Dendritic cell treated with granulocyte-macrophage colony-stimulating factor and Interleukin-4, amounts not matched to agents 40 ng/mL and 50 ng/mL, for 4 days (primary cell): ENCODE measurements at regions of chr20 and their contacts with region 1.

Region 1: DNA sequence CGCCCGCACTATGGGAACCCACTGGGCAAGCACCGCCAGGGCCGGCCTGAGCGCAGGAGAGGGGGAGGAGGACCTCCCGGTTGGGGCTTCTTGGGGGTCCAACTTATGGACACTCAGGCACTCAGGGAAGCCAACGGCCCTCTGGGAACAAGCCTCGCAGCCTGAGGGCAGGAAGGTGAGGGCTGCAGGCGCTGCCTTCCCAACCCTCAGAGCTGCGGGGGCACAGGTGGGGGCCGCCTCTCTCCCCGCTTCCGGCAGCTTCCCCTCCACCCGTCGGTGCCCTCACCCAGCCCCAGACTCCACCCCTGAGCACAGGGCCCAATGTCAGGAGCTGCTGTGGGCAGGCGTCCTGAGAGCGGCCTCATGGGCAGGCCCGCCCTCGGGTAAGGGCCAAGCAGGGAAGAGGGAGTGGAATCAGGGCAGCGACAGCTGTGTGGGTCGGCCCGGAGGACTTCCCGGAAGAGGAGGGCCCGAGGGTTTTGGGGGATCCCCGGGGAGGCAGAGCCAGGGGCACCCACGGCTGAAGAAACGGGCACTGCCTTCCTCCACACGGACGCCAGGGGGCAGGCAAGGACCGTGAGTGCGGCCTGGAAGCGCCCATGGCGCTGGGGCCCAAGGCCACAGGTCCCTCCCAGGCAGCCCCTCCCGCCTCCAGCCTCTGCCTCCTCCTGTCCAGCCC is 488 bp upstream of the PTK6 start:
- H3K4me3 Mint-ChIP-seq: peak overlapping the region; percentile 83
- H3K27ac Mint-ChIP-seq: peak overlapping the region; percentile 94
- H3K4me1 Mint-ChIP-seq: peaks cover 27% of the 10 kb centered on the region
- H3K27me3 Mint-ChIP-seq: peaks cover 40% of the 10 kb centered on the region

Region 2: DNA sequence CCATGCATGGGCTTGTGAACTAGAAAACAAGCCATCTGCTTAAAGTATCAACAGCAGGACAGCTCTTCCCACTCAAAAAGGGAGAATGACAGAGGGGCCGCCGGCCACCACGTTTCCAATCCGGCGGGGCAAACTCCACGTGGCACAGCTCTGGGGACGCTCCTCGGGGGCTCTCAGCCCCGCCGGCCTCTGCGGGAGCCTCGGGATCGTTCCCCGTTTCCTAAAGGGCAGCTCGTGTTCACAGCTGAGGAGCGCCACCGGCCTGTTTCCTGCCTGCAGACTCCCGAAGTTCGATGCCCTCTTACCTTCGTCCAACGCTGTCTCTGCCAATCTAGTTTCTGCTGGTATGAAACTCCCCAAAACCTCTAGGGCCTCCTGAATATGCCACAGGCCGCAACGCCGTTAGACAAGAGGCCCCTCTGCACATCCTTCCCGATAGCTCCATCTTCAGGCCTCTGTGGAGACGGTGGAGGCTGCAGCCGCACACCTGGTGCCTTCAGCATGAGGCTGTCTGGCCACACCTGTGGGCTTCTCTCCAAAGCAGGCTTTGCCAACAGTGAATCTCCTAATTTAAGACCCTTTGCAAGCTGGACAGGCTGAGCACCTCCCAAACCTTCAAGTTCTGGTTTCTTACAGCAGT is 111.7 kb before region 1 on chr20:
- intact Hi-C with region 1: no loop called
- H3K4me3 Mint-ChIP-seq: no peak overlapping the region
- H3K27ac Mint-ChIP-seq: no peak overlapping the region
- H3K4me1 Mint-ChIP-seq: no peaks in the 10 kb centered on the region
- H3K27me3 Mint-ChIP-seq: peaks cover 4% of the 10 kb centered on the region

Region 3: DNA sequence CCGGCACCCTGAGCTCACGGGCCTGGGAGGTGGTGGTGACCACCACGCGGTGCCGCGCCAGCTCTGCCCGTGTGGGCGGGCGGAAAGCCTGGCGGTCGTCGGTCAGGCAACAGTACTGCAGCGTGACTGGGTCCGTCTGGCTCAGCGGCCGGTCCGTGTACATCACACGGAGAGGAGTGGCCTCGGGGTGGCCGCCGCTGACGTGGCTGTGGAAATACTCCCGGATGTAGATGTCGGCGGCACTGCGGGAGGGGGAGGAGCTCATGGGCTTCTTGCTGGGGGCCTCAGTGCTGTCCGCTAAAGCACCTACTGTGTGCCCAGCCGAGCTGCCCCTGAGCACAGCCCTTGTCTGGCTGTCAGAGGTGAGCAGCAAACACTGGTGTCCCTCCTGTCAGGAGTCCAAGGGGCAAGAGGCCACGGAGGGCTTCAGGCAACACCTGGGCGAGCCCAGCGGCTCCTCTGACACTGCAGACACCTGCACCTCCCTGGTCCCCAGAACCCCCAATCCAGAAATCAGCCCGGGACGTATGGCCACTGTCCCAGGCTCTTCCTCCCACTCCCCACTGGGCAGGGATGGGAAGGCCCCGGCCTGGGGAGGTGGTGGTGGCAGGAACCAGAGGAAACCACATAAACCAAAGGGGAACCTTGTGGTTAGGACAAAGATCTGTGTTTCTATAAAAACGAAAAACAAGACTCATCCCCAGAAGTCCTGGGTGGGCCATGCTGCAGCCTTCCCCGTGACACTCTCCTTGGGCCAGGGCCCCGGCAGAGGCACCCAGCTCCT is 29.9 kb after region 1 on chr20:
- intact Hi-C with region 1: loop called (anchors 1 kb)
- H3K4me3 Mint-ChIP-seq: peak overlapping the region; percentile 70
- H3K27ac Mint-ChIP-seq: peak overlapping the region; percentile 89
- H3K4me1 Mint-ChIP-seq: peaks cover 36% of the 10 kb centered on the region
- H3K27me3 Mint-ChIP-seq: peaks cover 66% of the 10 kb centered on the region

Region 4: DNA sequence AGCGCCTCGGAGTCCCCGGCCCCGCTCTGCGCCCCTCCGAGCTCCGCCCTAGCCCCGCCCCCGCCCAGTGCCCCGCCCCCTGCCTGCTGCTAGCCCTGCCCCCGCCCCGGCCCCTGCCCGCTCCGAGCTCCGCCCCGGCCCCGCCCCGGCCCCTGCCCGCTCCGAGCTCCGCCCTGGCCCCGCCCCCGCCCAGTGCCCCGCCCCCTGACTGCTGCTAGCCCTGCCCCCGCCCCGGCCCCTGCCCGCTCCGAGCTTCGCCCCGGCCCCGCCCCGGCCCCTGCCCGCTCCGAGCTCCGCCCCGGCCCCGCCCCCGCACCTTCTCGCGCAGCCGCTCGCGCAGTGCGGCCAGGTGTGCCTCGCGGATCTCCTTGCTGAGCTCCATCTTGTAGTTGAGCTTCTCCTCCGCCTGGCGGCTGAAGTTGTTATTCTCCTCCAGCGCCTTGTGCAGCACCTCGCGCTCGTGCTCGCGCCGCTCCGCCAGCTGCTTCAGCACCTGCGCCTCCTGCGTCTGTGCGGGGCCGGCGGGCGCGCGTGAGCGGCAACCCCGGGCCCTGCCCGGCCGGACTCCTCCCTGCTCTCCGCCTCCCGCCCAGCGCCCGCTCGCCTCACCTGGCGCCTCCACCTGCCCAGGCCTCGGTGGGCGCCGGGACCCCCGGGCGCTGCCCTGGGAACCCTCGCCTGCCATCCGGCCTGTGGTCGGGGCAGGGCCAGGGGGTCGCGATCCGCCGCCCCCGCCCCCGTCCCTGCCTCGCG is 104.3 kb after region 1 on chr20:
- intact Hi-C with region 1: loop called (anchors 2 kb)
- H3K4me3 Mint-ChIP-seq: peak overlapping the region; percentile 72
- H3K27ac Mint-ChIP-seq: peak overlapping the region; percentile 84
- H3K4me1 Mint-ChIP-seq: peaks cover 32% of the 10 kb centered on the region
- H3K27me3 Mint-ChIP-seq: peaks cover 23% of the 10 kb centered on the region

Region 5: GRCh38 chr20:63858393-63859165 is 320.9 kb after region 1 on chr20:
- intact Hi-C with region 1: loop called (anchors 10 kb)
- H3K4me3 Mint-ChIP-seq: peak overlapping the region; percentile 57
- H3K27ac Mint-ChIP-seq: peak overlapping the region; percentile 84
- H3K4me1 Mint-ChIP-seq: peaks cover 80% of the 10 kb centered on the region
- H3K27me3 Mint-ChIP-seq: peaks cover 11% of the 10 kb centered on the region

Region 6: GRCh38 chr20:63955827-63956663 is 418.4 kb after region 1 on chr20 and contains the start of gene UCKL1:
- intact Hi-C with region 1: loop called (anchors 5 kb)
- H3K4me3 Mint-ChIP-seq: peak within 1 kb of the TSS; percentile 84
- H3K27ac Mint-ChIP-seq: peak within 1 kb of the TSS; percentile 84
- H3K4me1 Mint-ChIP-seq: peaks cover 54% of the 10 kb centered on the region
- H3K27me3 Mint-ChIP-seq: peaks cover 2% of the 10 kb centered on the region